ENCODE measurements at regions of chr7 and their contacts with region 1.

Region 1: GRCh38 chr7:55365675-55366460 is 731 bp downstream of the LANCL2 start:
- DNase-seq: peak; percentile 98
- ATAC-seq: peak; percentile 99

Region 2: DNA sequence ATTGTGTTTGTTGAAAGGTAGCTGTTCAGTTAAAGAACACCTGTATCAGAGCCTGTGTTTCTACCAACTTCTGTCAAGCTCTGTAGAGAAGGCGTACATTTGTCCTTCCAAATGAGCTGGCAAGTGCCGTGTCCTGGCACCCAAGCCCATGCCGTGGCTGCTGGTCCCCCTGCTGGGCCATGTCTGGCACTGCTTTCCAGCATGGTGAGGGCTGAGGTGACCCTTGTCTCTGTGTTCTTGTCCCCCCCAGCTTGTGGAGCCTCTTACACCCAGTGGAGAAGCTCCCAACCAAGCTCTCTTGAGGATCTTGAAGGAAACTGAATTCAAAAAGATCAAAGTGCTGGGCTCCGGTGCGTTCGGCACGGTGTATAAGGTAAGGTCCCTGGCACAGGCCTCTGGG is 192.2 kb before region 1 on chr7:
- intact Hi-C with region 1: no loop called
- DNase-seq: no peak
- ATAC-seq: no peak

Region 3: DNA sequence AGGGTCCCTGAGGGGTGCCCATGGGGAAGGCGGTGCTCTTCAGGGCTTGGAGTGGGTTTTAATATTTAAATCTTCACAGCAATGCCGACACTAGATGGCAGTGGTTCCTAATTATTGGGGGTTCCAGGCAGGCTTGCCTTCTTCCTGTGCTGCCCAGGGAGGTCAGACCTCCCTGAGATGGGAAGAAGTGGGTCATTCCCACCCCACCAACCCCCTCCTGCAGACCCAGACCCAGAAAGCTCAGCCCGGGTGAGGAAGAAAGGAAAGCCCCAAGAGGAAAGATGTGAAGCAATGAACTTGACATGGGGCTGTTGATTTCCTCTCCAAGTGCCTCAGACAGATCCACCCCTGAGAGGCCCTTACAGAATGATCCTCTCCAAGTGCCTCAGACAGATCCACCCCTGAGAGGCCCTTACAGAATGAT is 85.8 kb before region 1 on chr7:
- intact Hi-C with region 1: loop called (anchors 5 kb)
- DNase-seq: no peak
- ATAC-seq: peak; percentile 67

Region 4: DNA sequence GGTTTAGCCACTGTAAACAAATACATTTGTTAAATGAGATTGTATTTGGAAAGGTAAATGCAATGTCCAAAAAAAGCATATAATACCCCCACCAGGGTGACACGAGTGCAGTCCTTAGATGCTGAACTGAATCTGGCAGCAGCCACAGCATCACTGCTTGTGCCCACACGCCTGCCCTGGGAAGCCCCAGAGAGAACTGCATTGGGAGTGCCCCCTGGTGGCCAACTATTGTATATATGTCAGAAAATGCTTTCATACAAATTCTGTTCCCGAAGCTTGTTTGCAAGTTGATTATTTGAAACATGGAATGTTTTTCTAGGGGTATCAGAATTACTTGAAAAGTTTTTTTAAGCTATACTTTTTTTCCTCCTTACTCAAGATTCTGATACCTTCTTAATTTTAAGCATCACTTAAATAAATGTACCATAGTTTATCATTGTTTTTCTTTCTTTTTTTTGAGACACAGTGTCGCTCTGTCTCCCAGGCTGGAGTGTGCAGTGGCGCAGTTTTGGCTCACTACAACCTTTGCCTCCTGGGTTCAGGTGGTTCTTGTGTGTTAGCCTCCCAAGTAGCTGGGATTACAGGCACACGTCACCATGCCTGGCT is 49.4 kb after region 1 on chr7:
- intact Hi-C with region 1: loop called (anchors 5 kb)
- DNase-seq: peak; percentile 86
- ATAC-seq: peak; percentile 76

Region 5: DNA sequence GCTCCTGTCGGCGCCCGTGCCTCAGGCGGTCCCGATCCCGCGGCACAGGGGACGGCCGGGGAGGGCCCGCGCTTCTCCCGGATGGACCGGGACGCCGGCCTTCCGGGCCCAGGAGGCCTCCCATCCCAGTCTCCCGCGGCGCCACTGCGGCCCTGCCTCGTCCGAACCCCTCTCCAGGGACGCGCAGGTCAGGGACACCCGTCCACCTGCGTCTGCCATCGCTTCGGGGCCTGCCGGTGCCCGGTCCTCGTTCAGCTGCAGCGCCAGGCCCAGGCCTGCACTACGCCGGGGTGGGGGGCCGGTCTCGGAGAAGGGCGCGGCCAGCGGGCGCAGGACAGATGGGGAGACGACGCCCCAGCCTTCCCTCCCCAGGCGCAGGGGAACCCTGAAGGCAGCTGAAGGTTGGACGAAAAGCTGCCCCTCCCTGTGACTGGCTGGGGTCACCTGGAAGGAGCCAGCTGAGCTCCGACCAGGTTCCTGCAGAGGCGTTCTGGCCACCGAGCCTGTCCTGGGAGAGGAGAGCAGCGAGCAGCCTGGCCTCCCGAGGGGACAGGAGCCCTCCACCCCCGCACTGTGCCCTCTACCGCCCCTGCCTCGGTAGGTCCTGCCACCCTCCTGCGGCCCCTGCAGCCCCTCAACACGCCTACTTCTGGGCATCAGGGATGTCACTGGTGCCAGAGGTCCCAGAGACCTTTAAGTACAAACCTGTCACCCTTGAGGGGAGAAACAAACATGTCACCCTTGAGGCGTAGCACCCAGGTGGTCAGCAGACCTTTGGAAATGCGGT is 83.5 kb after region 1 on chr7:
- intact Hi-C with region 1: no loop called
- DNase-seq: no peak
- ATAC-seq: no peak

Region 6: DNA sequence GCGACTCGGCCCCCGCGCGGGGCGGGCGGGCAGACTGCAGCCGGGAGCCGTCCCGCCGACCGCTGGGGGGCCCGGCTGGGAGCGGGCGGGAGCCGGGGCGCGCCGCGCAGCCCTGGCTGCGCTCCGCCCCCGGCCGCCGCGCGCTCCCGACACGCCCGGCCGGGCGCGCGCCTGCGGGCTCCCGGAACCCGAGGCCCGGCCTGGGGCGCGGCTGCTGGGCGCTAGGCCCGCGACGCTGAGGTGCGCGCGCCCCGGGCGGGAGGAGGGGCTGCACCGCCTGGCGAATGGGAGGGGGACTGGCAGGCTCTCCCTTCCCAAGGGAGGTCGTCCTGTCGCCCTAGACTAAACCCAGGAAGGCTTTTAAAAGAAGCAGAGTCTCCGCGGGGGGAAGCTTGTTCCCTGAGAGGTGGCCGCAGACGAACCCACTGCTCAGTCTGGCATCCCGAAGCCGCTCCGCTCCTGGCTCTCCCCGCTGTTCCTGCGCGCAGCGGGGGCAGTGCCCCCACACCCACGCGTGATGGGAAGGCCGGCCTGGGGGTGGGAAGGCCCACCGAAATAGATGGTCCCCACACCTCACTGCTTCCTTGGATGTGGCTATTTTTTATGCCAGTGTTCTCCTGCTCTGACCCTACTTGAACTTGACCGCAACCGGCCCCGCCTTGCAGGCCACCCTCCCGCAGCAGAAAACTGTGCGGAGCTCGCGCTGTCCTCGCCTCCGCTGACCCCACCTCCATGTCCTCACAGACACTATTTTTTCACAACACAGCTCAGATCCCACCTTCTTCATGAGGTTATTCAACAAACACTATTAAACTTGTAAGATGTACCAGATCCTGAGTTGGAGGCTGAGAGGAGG is 206.7 kb after region 1 on chr7 and contains the start of gene VOPP1:
- intact Hi-C with region 1: loop called (anchors 2 kb)
- DNase-seq: peak; percentile 83
- ATAC-seq: peak; percentile 88
- total RNA-seq, gene VOPP1: 23.1 TPM

Region 7: DNA sequence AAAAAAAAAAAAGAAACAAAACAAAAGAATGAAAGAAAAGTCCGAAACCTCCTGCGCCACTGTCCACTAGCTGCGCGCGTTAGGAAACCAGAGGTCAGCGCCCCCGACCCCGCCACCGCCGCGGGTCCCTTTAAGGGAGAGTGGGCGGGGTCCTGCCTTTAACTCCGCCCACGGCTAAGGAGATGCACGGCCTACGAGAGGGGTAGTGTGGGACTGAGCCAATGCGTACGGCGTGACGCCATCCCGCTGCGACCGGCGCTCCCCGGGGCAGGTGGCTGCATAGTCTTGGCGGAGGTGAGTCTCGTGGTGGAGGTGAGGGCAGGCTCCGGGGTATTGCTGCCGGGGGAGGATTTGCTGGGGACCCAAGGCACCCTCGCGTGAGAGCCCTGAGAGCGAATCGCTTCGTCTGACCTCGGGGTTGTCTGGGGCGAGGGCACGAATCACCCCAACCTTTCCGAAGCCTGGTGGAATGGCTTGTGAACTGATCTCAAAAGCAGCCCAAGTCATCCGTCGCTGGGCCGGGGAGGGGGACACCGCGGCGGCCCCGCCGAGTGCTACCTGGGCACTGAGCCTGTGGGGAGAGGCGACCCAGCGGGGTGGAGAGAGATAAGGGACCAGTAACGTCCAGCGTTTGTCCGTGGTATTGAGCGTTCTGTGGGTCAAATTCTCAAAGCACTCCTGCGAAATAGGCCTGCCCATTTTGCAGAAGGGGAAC is 585.9 kb after region 1 on chr7 and contains the start of gene MRPS17:
- intact Hi-C with region 1: loop called (anchors 10 kb)
- DNase-seq: peak; percentile 96
- ATAC-seq: peak; percentile 100
- total RNA-seq, gene MRPS17: 20.8 TPM